ENCODE measurements at regions of chr1 and their contacts with region 1.

Region 1: DNA sequence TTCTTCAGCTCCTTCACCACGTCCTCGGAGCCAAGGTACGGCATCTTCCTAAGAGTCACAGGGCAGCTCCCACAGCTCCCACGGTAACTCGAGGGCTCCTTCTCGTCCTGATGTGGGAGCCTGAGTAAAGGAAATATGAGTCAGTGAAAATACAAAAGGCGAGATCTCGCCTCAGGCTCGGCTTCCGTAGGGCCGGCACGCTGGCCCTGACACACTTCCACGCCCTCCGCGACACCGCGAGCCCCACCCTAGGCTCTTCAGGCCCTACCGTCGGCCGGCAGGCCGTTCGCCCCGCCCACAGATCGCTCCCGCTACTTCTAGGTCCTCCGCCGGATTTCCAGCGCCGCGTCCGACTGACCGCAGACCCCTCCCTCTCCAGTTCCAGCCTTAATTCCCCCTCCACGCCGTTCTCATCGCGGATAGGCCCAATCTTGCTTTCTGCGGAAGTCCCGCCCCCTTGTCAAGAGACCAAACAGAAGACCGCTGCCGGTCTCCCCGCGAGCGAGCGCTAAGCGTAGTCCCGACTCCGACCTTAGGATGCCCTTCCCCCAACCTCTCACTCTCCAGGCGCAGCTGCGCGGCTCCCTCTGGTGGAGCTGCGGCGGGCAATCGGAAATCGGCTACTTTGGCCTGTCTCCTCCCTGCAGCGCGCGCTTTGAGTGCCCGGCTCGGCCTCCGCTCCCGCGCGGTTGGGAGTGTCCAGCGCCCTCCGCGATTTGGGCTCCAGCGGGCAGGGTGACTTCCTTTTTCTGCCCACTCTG is at the starts of genes AP4B1 and DCLRE1B:
- DNase-seq: peak; percentile 99
- H3K4me3 ChIP-seq: peak within 1 kb of the TSS; percentile 56 to 93 (median 76)
- H3K27ac ChIP-seq: peak within 1 kb of the TSS; percentile 92 to 97 (median 96)
- H3K4me1 ChIP-seq: peaks cover 10 to 49% (median 31%) of the 10 kb centered on the region in 4 donors
- H3K27me3 ChIP-seq: no peaks in the 10 kb centered on the region
- CTCF ChIP-seq: peak; percentile 63 to 96 (median 76)
- EP300 ChIP-seq: peak; percentile 28
- POLR2A ChIP-seq: peak; percentile 86
- total RNA-seq, gene AP4B1: 7.2 to 37.2 (median 16.5) TPM
- total RNA-seq, gene DCLRE1B: 2.4 to 6.2 (median 2.9) TPM in 3 of 4 donors, not detected in the other

Region 2: DNA sequence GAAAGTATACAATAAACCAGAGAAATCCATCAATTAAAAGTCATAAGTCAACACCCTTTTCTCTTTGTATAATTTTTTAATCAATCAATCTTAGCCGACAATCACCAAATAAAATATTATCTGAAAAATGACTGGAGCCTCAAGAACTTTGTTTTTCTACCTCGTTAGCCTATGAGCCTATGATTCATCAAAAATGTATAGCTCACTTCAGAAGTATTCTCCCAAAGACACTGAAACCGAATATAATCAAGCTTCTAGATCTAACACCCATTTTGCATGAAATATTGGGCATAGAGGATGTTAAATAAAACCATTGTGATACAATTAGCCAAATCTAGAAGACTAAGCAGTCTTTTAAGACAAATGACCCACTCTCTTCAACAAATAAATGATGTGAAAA is 74.8 kb before region 1 on chr1:
- in situ Hi-C with region 1: loop called in 2 of 4 experiments (anchors 5 to 10 kb)
- intact Hi-C with region 1: loop called (anchors 5 kb)
- DNase-seq: no peak
- H3K4me3 ChIP-seq: no peak overlapping the region
- H3K27ac ChIP-seq: no peak overlapping the region
- H3K4me1 ChIP-seq: no peaks in the 10 kb centered on the region
- H3K27me3 ChIP-seq: no peaks in the 10 kb centered on the region
- CTCF ChIP-seq: no peak
- EP300 ChIP-seq: no peak
- POLR2A ChIP-seq: no peak

Region 3: GRCh38 chr1:113835642-113836307 is 69.1 kb before region 1 on chr1:
- in situ Hi-C with region 1: loop called in 2 of 4 experiments (anchors 5 to 10 kb)
- intact Hi-C with region 1: loop called (anchors 5 kb)
- DNase-seq: no peak
- H3K4me3 ChIP-seq: no peak overlapping the region
- H3K27ac ChIP-seq: no peak overlapping the region
- H3K4me1 ChIP-seq: peaks cover 0 to 8% (median 0%) of the 10 kb centered on the region in 4 donors
- H3K27me3 ChIP-seq: no peaks in the 10 kb centered on the region
- CTCF ChIP-seq: peak; percentile 62 to 77 (median 67)
- EP300 ChIP-seq: no peak
- POLR2A ChIP-seq: no peak

Region 4: DNA sequence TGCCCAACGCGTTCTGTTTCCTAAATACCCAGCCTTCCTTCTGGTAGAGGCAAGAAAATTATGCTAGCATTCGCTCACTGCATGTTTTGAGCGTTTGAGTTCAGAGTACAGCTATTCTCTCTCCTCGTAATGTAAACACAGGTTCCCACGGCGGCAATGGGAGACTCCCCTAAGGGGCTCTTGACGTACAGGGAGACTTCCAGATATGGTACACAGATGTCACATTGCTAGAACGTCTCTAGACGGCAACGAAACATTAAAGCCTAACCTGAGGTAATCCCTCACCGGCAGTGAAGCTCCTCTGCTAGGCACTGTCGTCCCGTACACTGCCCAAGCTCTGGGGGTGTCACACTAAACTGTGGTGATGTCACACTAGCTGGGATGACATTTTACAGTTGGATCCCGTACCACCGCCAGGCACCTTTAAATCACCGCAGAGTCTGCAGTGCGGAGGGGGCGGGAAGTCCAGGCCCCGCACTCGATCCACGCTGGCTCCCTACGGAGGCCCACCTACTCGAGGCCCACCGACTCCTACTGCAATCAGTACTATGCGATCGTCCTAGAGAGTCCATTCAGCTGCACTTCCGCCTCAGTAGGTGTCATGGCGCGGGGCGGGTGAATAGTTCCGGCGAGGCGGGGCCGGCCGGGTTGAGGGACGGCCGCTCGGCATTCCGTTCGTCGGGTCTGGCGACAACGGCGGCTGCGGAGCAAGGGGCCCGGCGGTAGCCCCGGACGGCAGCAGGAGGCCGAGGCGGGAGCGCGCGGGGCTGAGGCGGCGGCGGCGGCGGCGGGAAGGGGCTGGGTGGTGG is 24.3 kb after region 1 on chr1 and contains the start of gene HIPK1:
- in situ Hi-C with region 1: no loop called
- intact Hi-C with region 1: loop called (anchors 1 kb)
- DNase-seq: peak; percentile 95
- H3K4me3 ChIP-seq: peak within 1 kb of the TSS; percentile 86 to 99 (median 89)
- H3K27ac ChIP-seq: peak within 1 kb of the TSS; percentile 95 to 99 (median 98)
- H3K4me1 ChIP-seq: peaks cover 26 to 49% (median 40%) of the 10 kb centered on the region in 4 donors
- H3K27me3 ChIP-seq: no peaks in the 10 kb centered on the region
- CTCF ChIP-seq: peak in 2 of 5 experiments; percentile 36 to 45
- EP300 ChIP-seq: no peak
- POLR2A ChIP-seq: peak; percentile 75
- total RNA-seq, gene HIPK1: 48.3 to 63.9 (median 53.1) TPM

Region 5: GRCh38 chr1:113940365-113941244 is 35.8 kb after region 1 on chr1:
- in situ Hi-C with region 1: no loop called
- intact Hi-C with region 1: loop called (anchors 5 kb)
- DNase-seq: peak; percentile 14
- H3K4me3 ChIP-seq: no peak overlapping the region
- H3K27ac ChIP-seq: no peak overlapping the region
- H3K4me1 ChIP-seq: peaks cover under 1 to 41% (median 6%) of the 10 kb centered on the region in 4 donors
- H3K27me3 ChIP-seq: no peaks in the 10 kb centered on the region
- CTCF ChIP-seq: no peak
- EP300 ChIP-seq: no peak
- POLR2A ChIP-seq: no peak